ENCODE measurements at regions of chr12 and their contacts with region 1.

Region 1: DNA sequence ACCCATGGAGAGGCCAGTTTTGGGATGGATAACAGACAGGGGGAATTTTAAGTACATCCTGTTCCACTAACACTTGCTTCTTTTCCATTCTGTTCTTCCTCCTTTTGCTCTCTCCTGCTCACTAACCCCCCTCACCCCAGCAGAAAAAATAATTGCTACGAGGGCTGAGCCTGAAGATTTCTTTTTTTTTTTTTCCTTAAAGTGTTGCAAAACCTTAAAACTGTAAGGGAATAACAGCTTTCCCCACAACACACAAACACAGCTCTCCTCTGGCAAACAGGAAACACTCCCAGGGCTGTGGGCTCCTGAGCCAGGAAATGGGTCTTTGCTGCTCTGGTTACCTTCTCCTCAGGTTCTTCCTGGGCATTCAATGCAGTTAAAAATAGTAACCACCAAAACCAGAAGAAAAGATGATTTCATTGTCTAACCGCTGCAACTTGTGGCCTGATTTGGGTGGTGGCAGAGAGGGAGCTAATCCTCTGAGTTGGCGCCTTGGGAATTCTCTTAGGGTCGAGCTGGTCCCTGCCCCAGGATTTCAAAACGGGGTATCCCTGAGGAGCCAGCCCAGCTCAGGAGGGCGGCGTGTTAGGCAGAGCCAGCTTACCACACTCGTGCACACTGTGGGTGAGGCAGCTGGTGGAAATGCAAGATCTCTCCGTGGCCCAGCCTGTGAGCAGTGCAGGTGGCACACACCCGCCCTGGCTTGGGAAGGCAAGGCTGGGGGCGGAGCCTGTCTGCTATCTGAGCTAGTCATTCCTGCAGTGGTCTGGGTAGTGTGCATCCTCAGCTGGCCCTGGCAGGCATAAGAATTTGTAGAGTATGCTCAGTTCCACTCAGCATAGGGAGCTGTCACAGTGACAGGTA is 17.1 kb upstream of the EMP1 start:
- DNase-seq: peak; percentile 85 to 96 (median 95)
- H3K4me3 ChIP-seq: peak overlapping the region in 6 of 7 experiments; percentile 2 to 70 (median 52)
- H3K27ac ChIP-seq: peak overlapping the region in 1 of 2 experiments; percentile 50
- H3K4me1 ChIP-seq: peaks cover 6 to 76% (median 54%) of the 10 kb centered on the region in 4 experiments
- H3K27me3 ChIP-seq: no peaks in the 10 kb centered on the region

Region 2: GRCh38 chr12:12916135-12916944 is 263.1 kb before region 1 on chr12:
- CTCF ChIA-PET with region 1: no interaction called
- POLR2A ChIA-PET with region 1: no interaction called
- DNase-seq: peak; percentile 79 to 89 (median 87)
- H3K4me3 ChIP-seq: peak overlapping the region in 5 of 7 experiments; percentile 19 to 55 (median 46)
- H3K27ac ChIP-seq: no peak overlapping the region
- H3K4me1 ChIP-seq: peaks cover 0 to 26% (median 22%) of the 10 kb centered on the region in 4 experiments
- H3K27me3 ChIP-seq: no peaks in the 10 kb centered on the region

Region 3: DNA sequence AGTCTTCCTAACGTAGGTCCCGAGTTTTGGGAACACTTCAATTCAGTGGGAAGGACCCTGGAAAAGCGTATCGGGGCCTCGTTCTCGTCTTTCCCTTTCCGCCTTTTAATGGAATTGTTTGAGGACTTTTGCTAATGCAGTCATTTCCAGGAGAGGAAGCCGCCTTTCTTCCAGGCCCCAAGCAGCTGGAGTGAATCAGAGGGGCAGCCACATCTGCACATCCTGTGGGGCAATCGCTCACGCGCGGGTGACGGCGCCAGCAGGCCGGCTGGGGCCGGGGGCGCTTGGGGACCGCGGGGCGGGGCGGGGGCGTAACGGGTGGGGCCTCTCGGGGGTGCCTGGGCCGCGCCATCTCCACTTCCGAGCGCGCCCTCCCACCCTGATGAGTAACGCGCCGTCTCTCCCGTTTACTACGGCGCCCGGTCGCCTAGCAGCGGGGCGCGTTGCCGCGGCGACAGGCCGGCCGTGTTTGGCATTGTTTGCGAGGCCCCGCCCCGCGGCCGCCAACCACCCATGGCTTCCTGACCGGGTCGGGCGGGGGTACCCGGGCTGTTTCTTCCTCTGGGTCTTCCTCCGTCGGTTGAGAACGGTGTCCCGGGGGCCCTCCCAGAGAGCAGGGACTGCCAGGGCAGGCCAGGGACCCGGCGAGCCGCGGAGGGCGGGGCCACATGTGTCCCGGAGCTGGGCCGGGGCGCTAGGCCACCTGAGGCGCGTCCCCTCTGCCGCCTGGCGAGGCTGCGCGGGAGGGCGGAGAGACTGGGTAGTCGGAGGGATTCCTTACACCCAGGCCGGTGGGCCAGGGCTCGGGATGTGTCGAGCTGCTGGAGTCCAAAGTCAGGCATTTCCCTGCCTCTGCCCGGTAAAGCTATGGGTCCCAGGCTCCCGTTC is 78.3 kb before region 1 on chr12:
- CTCF ChIA-PET with region 1: interaction called, 12 read pairs
- POLR2A ChIA-PET with region 1: interaction called, 8 read pairs
- DNase-seq: peak; percentile 96 to 99 (median 99)
- H3K4me3 ChIP-seq: peak overlapping the region in 6 of 7 experiments; percentile 41 to 72 (median 64)
- H3K27ac ChIP-seq: peak overlapping the region; percentile 97 to 99
- H3K4me1 ChIP-seq: peaks cover 31 to 74% (median 72%) of the 10 kb centered on the region in 4 experiments
- H3K27me3 ChIP-seq: no peaks in the 10 kb centered on the region

Region 4: GRCh38 chr12:13196130-13196921 is 16.9 kb after region 1 on chr12 and contains the start of gene EMP1:
- CTCF ChIA-PET with region 1: interaction called, 8 read pairs
- POLR2A ChIA-PET with region 1: interaction called, 12 read pairs
- DNase-seq: peak; percentile 91 to 98 (median 98)
- H3K4me3 ChIP-seq: peak within 1 kb of the TSS; percentile 16 to 95 (median 72)
- H3K27ac ChIP-seq: peak within 1 kb of the TSS; percentile 22 to 85
- H3K4me1 ChIP-seq: peaks cover 18 to 74% (median 63%) of the 10 kb centered on the region in 4 experiments
- H3K27me3 ChIP-seq: no peaks in the 10 kb centered on the region